Dendritic cell treated with granulocyte-macrophage colony-stimulating factor and Interleukin-4, amounts not matched to agents 40 ng/mL and 50 ng/mL, for 4 days (primary cell): ENCODE measurements at regions of chr2 and their contacts with region 1.

Region 1: GRCh38 chr2:177148477-177149154 is 64.0 kb upstream of the HNRNPA3 start:
- H3K4me3 Mint-ChIP-seq: peak overlapping the region; percentile 81
- H3K27ac Mint-ChIP-seq: no peak overlapping the region
- H3K4me1 Mint-ChIP-seq: peaks cover 10% of the 10 kb centered on the region
- H3K27me3 Mint-ChIP-seq: peaks cover 29% of the 10 kb centered on the region

Region 2: DNA sequence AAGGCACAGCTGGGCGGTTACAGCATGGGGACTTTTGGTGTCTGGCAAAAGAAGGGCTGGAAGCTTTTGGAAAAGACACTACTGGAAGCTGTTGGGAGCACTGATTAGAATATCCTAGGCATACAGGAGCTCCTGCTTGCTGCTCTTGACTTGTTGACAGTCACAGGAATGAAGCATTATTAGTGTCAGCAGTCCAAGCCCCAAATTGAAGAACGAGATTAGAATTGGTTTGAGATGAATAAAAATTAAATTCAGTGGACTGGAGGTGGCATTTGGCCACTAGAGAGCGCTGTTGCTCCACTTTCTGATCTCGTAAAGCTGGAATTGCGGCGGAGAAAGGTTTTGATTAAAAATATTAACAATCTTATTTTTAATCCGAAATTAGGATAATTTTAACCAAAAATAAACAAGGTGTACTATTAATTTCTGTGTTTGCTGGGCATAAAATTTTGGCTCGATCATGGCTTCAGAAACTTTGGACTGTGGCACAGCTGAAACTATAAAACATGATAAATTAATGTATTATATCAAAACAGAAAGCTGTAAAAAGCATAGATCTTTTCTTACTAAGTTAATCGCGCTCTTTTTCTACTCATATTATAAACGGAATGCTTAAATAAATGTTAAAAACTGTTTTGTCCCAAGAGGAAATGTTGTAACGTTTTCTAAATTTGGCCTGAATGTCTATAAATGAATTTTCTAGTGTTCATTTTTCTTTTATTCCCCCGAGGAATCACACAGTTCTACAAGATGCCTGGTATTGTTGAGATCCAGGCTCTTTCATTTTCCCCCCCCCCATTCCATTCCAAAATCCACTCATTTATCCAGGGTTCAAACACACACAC is 1021.5 kb before region 1 on chr2:
- intact Hi-C with region 1: loop called (anchors 2 kb)
- H3K4me3 Mint-ChIP-seq: no peak overlapping the region
- H3K27ac Mint-ChIP-seq: no peak overlapping the region
- H3K4me1 Mint-ChIP-seq: peaks cover 46% of the 10 kb centered on the region
- H3K27me3 Mint-ChIP-seq: peaks cover 85% of the 10 kb centered on the region

Region 3: GRCh38 chr2:176454893-176455811 is 693.5 kb before region 1 on chr2:
- intact Hi-C with region 1: loop called (anchors 10 kb)
- H3K4me3 Mint-ChIP-seq: no peak overlapping the region
- H3K27ac Mint-ChIP-seq: no peak overlapping the region
- H3K4me1 Mint-ChIP-seq: no peaks in the 10 kb centered on the region
- H3K27me3 Mint-ChIP-seq: peaks cover 21% of the 10 kb centered on the region

Region 4: DNA sequence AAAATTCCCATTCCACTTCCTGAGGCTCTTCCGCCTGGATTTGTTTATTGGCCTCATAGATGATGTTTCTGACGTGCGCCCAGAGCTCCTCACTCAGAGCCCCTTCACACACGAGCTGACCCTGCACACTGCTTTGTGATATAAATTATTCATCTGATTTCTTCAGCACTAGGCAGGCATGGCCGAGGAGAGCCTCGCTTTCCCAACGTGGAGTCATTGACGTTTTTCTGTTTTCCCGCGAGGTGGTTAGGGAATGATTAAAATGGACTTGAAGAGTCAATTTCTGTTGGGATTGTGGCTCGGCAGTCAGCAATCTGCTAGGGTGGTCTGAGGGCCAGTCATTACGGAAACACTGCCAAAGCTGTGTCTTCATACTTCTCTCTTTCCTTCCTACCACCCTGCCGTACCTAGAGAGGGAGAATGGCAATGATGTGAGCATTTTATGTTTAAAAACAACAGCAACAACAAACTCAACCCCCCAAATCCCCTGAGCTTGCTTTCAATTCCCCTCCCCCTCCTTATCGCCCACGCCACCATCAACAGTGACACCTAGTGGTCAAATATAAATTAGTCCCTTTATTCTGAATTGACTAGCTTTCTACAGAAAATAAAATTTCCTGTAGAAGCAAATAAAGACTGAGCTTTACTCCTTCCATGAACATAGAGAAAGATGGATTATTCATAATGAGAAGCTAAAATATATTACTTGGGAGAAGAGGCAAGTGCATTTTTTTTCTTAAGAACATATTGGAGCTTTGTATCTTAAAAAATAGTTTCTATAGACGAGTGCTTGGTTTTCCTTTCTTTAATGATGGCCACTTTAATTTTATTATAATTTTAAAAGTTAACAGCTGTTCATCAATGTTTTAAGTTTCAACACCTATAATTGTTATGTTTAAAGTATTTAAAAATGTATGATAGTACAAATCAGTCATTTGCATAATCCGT is 594.2 kb before region 1 on chr2:
- intact Hi-C with region 1: loop called (anchors 10 kb)
- H3K4me3 Mint-ChIP-seq: peak overlapping the region; percentile 52
- H3K27ac Mint-ChIP-seq: no peak overlapping the region
- H3K4me1 Mint-ChIP-seq: peaks cover 13% of the 10 kb centered on the region
- H3K27me3 Mint-ChIP-seq: peaks cover 39% of the 10 kb centered on the region

Region 5: DNA sequence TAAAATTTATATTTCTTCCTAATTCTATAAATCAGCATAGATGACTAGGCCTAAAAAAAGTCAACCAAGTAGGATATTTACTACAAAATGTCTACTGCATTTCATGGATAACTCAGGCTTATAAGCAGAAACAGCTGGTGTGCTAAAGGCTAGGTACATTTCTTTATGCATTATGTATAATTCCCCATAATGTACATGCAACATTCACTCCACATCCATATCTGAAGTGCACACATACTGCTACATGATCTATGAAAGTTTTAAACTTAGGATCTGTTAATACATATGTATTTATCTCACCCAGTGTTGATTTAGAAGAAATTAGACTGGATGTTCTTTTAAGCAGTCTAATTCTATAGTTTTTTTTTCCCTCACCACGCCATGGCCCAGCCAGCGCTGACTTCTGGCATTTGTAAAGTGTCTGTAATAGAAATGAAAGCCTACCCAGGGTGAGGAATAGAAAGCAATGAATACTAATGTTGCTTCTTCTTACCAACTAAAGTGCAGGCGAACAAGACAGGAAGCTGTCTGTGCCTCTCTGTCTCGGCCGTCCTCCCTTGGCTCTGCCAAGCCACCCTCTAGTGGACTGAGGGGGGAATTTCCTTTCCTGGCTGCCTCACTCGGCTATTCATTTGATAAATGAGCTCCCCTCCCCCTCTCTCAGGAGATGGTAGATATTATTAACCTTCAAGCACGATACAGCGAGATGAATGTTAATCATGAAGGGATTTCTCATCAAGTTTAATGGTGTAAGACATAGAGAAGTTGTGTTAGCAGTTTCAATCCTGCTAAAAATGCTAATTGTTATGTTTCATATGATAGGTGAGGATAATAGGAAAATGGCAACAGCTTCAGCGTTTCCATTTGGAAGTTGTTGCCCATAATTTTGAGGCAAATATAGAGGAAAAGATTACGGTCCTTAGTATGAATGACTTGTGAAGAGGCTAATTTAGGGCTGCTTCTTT is 494.9 kb before region 1 on chr2:
- intact Hi-C with region 1: loop called (anchors 5 kb)
- H3K4me3 Mint-ChIP-seq: no peak overlapping the region
- H3K27ac Mint-ChIP-seq: no peak overlapping the region
- H3K4me1 Mint-ChIP-seq: no peaks in the 10 kb centered on the region
- H3K27me3 Mint-ChIP-seq: peaks cover 42% of the 10 kb centered on the region

Region 6: GRCh38 chr2:176814306-176815052 is 334.1 kb before region 1 on chr2:
- intact Hi-C with region 1: loop called (anchors 5 kb)
- H3K4me3 Mint-ChIP-seq: no peak overlapping the region
- H3K27ac Mint-ChIP-seq: no peak overlapping the region
- H3K4me1 Mint-ChIP-seq: no peaks in the 10 kb centered on the region
- H3K27me3 Mint-ChIP-seq: no peaks in the 10 kb centered on the region

Region 7: GRCh38 chr2:177056481-177056929 is 92.1 kb before region 1 on chr2:
- intact Hi-C with region 1: no loop called
- H3K4me3 Mint-ChIP-seq: no peak overlapping the region
- H3K27ac Mint-ChIP-seq: no peak overlapping the region
- H3K4me1 Mint-ChIP-seq: no peaks in the 10 kb centered on the region
- H3K27me3 Mint-ChIP-seq: no peaks in the 10 kb centered on the region